T-cell (primary cell): ENCODE measurements at regions of chr12 and their contacts with region 1.

Region 1: DNA sequence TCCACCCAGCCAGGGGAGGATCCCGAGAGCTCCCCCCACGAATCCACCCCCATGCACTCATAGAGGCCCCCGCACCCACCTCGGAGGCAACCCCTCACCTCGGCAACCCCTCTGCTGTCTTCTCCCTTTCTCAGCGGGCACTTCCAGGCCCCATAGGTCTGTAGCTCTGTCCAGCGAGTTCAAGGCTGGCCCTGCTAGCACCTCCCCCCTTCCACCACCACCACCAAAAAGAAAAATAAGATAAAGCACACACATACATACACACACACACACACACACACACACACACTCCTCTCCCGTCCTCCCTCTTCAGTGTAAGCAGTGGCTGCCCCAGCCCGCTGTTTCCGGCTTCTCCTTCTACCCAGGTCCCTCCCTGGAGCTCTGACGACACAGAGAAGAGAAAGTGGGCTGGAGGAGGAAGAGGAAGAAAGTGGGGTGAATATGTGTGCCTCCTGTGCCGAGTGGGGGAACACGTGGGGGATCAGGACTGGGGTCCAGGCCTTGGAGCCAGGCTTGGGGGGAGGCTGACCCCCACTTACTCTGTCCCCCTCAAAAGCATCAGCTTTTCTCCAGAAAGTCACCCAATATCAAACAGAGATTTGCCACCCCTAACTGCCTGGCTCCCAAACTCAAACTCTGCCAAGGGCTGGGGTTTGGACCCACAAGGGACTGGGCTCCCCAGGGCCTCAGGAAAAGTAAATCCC is at the start of gene STAT6:
- DNase-seq: peak; percentile 55 to 93 (median 85)
- ATAC-seq: peak; percentile 71 to 76 (median 72)
- H3K4me3 ChIP-seq: peak within 1 kb of the TSS; percentile 68 to 97
- H3K4me3 Mint-ChIP-seq: peak within 1 kb of the TSS; percentile 89 to 98 (median 92)
- H3K27ac ChIP-seq: peak within 1 kb of the TSS; percentile 91
- H3K27ac Mint-ChIP-seq: peak within 1 kb of the TSS; percentile 96 to 97
- H3K4me1 ChIP-seq: peaks cover 17 to 52% of the 10 kb centered on the region in 2 experiments
- H3K4me1 Mint-ChIP-seq: peaks cover 44 to 59% (median 50%) of the 10 kb centered on the region in 3 donors
- H3K27me3 ChIP-seq: no peaks in the 10 kb centered on the region
- H3K27me3 Mint-ChIP-seq: peaks cover 0 to 1% of the 10 kb centered on the region in 2 donors
- total RNA-seq, gene STAT6: 227 to 348 (median 341) TPM

Region 2: DNA sequence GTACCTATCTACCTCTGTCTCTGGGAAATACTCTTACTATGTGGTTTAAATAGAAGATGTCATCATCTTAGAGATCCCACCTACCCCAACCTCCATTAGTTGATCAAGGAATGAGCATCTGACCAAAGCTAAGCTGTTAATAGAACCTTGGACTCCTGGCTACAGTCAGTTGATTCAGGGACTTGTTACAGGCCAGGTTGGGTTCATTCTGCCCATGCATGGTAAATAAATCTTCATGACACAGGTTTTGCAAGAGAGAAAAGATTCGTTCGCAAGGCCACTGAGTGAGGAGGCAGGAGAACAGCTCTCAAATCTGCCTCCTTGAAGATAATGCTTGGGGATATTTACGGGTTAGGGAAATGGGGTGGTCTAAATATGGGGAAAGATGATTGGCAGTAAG is 196.5 kb before region 1 on chr12:
- CTCF ChIA-PET with region 1: no interaction called
- POLR2A ChIA-PET with region 1: no interaction called
- DNase-seq: no peak
- ATAC-seq: no peak
- H3K4me3 ChIP-seq: no peak overlapping the region
- H3K4me3 Mint-ChIP-seq: no peak overlapping the region
- H3K27ac ChIP-seq: no peak overlapping the region
- H3K27ac Mint-ChIP-seq: no peak overlapping the region
- H3K4me1 ChIP-seq: no peaks in the 10 kb centered on the region
- H3K4me1 Mint-ChIP-seq: no peaks in the 10 kb centered on the region
- H3K27me3 ChIP-seq: peaks cover 0 to 5% of the 10 kb centered on the region in 2 experiments
- H3K27me3 Mint-ChIP-seq: peaks cover 21 to 27% of the 10 kb centered on the region in 2 donors

Region 3: GRCh38 chr12:56998981-56999380 is 112.2 kb before region 1 on chr12:
- CTCF ChIA-PET with region 1: interaction called in 1 of 2 experiments, 13 read pairs
- POLR2A ChIA-PET with region 1: no interaction called
- DNase-seq: no peak
- ATAC-seq: peak in 2 of 4 experiments; percentile 21 to 28
- H3K4me3 ChIP-seq: no peak overlapping the region
- H3K4me3 Mint-ChIP-seq: peak overlapping the region in 1 of 3 donors; percentile 10
- H3K27ac ChIP-seq: no peak overlapping the region
- H3K27ac Mint-ChIP-seq: peak overlapping the region; percentile 49 to 52
- H3K4me1 ChIP-seq: peaks cover 0 to 17% of the 10 kb centered on the region in 2 experiments
- H3K4me1 Mint-ChIP-seq: peaks cover 45 to 57% (median 52%) of the 10 kb centered on the region in 3 donors
- H3K27me3 ChIP-seq: no peaks in the 10 kb centered on the region
- H3K27me3 Mint-ChIP-seq: no peaks in the 10 kb centered on the region

Region 4: DNA sequence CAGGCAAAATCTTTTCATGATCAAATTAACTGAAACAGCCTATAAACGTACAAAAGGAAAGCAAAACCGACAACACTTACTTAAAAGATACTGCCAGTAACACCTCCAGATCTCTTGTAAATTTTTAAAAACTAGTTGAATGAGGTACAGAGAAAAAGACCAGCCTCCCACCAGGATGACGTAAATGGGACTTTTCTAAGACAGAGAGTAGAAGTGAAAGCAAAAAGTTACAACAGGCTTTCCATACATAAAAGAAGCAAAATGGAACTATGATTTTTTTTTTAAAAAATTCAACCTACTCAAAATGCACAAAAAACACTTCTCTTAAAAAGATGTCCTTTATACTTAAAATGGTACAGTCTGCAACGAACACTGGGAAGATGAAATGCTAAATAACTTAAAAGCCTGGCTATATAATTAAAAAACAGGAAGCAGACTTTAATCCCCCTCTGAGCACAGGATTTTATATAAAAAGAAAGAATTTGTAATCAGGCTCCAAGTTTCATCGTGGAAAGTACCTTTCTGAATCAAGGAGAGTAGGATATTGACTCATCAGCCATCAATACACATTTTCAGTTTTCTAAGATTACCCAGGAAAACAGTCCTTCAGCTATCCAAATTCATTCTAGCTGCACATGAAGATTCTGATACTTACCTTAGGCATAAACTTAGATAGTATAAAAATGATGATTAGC is 47.0 kb before region 1 on chr12:
- CTCF ChIA-PET with region 1: interaction called, 25 to 201 read pairs
- POLR2A ChIA-PET with region 1: interaction called, 5 to 9 read pairs
- DNase-seq: peak in 32 of 35 experiments; percentile 17 to 91 (median 61)
- ATAC-seq: peak; percentile 84 to 99 (median 88)
- H3K4me3 ChIP-seq: peak overlapping the region in 1 of 2 donors; percentile 26
- H3K4me3 Mint-ChIP-seq: peak overlapping the region; percentile 72 to 76 (median 75)
- H3K27ac ChIP-seq: peak overlapping the region; percentile 91
- H3K27ac Mint-ChIP-seq: peak overlapping the region; percentile 96 to 97
- H3K4me1 ChIP-seq: peaks cover 4 to 13% of the 10 kb centered on the region in 2 experiments
- H3K4me1 Mint-ChIP-seq: peaks cover 18 to 31% (median 29%) of the 10 kb centered on the region in 3 donors
- H3K27me3 ChIP-seq: no peaks in the 10 kb centered on the region
- H3K27me3 Mint-ChIP-seq: no peaks in the 10 kb centered on the region

Region 5: DNA sequence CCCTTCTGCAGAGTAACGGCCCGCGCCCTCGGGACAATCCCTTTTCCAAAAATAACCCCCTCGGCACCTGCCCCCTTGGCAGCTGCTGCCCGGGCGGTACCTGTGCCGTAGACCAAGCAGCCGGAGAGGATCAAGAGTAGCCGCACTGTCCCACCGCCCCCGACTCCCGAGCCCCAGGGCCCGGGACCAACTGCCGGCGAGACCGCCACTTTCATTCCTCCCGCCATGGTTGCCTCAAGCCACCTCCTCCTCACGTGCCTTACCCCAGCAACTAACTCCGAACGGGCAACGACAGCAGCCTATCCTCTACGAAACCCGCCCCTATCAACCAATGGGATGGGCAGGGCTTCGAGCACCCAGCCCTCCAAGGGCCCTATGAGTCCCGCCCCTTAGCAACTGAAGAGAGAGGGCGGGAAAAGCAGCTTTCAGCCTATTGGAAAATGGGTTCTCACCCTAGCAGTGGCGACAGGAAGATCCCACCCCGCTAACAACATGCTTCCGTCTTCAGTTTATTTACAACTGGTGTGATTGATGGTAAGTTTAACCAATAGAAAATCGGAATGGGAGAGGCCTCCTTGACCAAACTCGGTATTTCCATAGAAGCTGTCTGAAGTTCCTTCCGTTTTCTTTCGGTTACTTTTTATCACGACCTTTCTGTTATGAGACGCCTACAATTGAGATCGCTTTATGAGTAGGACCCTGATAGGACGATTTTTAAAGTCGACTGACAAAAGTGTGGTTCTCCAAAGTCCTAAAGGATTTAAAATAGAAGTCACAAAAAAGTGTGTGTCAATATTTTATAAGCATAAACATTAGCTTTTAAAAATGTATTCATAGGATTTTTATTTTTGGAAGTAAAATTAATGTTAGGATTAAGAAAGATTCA is 32.4 kb before region 1 on chr12 and contains the start of gene NEMP1:
- CTCF ChIA-PET with region 1: interaction called, 3 to 201 read pairs
- POLR2A ChIA-PET with region 1: interaction called, 9 to 11 read pairs
- DNase-seq: peak; percentile 78 to 100 (median 96)
- ATAC-seq: peak; percentile 94 to 98 (median 96)
- H3K4me3 ChIP-seq: peak within 1 kb of the TSS; percentile 73 to 82
- H3K4me3 Mint-ChIP-seq: peak within 1 kb of the TSS; percentile 93 to 100 (median 97)
- H3K27ac ChIP-seq: peak within 1 kb of the TSS; percentile 59
- H3K27ac Mint-ChIP-seq: peak within 1 kb of the TSS; percentile 94
- H3K4me1 ChIP-seq: peaks cover 9 to 21% of the 10 kb centered on the region in 2 experiments
- H3K4me1 Mint-ChIP-seq: peaks cover 19 to 32% (median 22%) of the 10 kb centered on the region in 3 donors
- H3K27me3 ChIP-seq: no peaks in the 10 kb centered on the region
- H3K27me3 Mint-ChIP-seq: no peaks in the 10 kb centered on the region
- total RNA-seq, gene NEMP1: 10.7 to 26.1 (median 19.9) TPM

Region 6: GRCh38 chr12:57124259-57124877 is 13.2 kb after region 1 on chr12:
- CTCF ChIA-PET with region 1: interaction called, 6 to 26 read pairs
- POLR2A ChIA-PET with region 1: interaction called, 3 to 7 read pairs
- DNase-seq: peak; percentile 37 to 89 (median 64)
- ATAC-seq: peak; percentile 44 to 59 (median 57)
- H3K4me3 ChIP-seq: no peak overlapping the region
- H3K4me3 Mint-ChIP-seq: no peak overlapping the region
- H3K27ac ChIP-seq: no peak overlapping the region
- H3K27ac Mint-ChIP-seq: peak overlapping the region in 1 of 2 donors; percentile 3
- H3K4me1 ChIP-seq: peaks cover 3 to 22% of the 10 kb centered on the region in 2 experiments
- H3K4me1 Mint-ChIP-seq: peaks cover 8 to 14% (median 10%) of the 10 kb centered on the region in 3 donors
- H3K27me3 ChIP-seq: peaks cover 2 to 21% of the 10 kb centered on the region in 2 experiments
- H3K27me3 Mint-ChIP-seq: peaks cover 0 to 3% of the 10 kb centered on the region in 2 donors

Region 7: GRCh38 chr12:57216195-57216911 is 105.2 kb after region 1 on chr12 and contains the start of gene NXPH4:
- CTCF ChIA-PET with region 1: no interaction called
- POLR2A ChIA-PET with region 1: no interaction called
- DNase-seq: peak in 15 of 35 experiments; percentile 25 to 67 (median 41)
- ATAC-seq: peak; percentile 34 to 51 (median 44)
- H3K4me3 ChIP-seq: peak within 1 kb of the TSS; percentile 32 to 36
- H3K4me3 Mint-ChIP-seq: peak within 1 kb of the TSS; percentile 77 to 80 (median 80)
- H3K27ac ChIP-seq: no peak within 1 kb of the TSS
- H3K27ac Mint-ChIP-seq: peak within 1 kb of the TSS in 1 of 2 donors; percentile 29
- H3K4me1 ChIP-seq: peaks cover 2 to 65% of the 10 kb centered on the region in 2 experiments
- H3K4me1 Mint-ChIP-seq: peaks cover 38 to 57% (median 44%) of the 10 kb centered on the region in 3 donors
- H3K27me3 ChIP-seq: peaks cover 6 to 92% of the 10 kb centered on the region in 2 experiments
- H3K27me3 Mint-ChIP-seq: peaks cover 65 to 68% of the 10 kb centered on the region in 2 donors
- total RNA-seq, gene NXPH4: 0.49 to 4.5 (median 1.0) TPM in 4 of 5 donors, not detected in the other

Region 8: GRCh38 chr12:57268264-57268663 is 157.1 kb after region 1 on chr12:
- CTCF ChIA-PET with region 1: no interaction called
- POLR2A ChIA-PET with region 1: no interaction called
- DNase-seq: no peak
- ATAC-seq: no peak
- H3K4me3 ChIP-seq: no peak overlapping the region
- H3K4me3 Mint-ChIP-seq: no peak overlapping the region
- H3K27ac ChIP-seq: no peak overlapping the region
- H3K27ac Mint-ChIP-seq: peak overlapping the region in 1 of 2 donors; percentile 2
- H3K4me1 ChIP-seq: peaks cover 0 to 5% of the 10 kb centered on the region in 2 experiments
- H3K4me1 Mint-ChIP-seq: no peaks in the 10 kb centered on the region
- H3K27me3 ChIP-seq: no peaks in the 10 kb centered on the region
- H3K27me3 Mint-ChIP-seq: no peaks in the 10 kb centered on the region